Activated CD4-positive, alpha-beta T cell treated with anti-CD3 and anti-CD28 coated beads, Interleukin-2, amount 10 ng/mL, durations not matched to agents 7 days and 5 days (primary cell): ENCODE measurements at regions of chr10 and their contacts with region 1.

Region 1: DNA sequence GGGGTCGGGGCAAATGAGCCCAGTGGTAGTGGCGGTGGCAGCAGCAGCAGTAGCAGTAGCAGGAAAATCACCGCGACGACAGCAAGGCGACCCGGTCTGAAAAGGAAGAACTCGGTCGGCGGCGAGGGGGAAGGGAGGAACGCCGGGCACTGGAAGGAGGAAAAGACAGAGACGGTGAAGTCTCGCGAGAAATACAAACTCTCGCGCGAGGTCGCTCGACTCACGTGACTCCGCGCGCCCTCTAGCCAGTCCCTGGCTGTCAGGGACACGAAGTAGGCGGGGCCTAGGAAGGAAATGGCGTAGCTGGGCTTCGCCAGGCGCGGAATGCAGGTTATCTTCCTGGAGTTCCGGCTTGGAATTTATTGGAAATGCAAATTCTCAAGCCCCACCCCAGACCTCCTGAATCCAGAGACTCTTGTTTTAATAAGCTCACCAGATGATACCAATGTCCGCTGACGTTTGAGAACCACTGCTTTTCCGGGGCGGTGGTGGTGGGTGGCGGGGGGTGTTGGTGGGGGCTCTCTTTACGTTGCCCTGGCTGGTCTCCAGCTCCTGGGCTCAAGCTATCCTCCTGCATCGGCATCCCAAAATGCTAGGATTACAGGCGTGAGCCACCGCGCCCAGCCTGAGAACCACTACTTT is at the start of gene SMNDC1:
- DNase-seq: peak; percentile 98
- H3K4me3 Mint-ChIP-seq: peak within 1 kb of the TSS; percentile 96
- H3K27ac Mint-ChIP-seq: peak within 1 kb of the TSS; percentile 99
- H3K4me1 Mint-ChIP-seq: peaks cover 56% of the 10 kb centered on the region
- H3K27me3 Mint-ChIP-seq: peaks cover 2% of the 10 kb centered on the region
- total RNA-seq, gene SMNDC1: 36.3 to 44.2 TPM

Region 2: GRCh38 chr10:110059925-110060324 is 245.0 kb before region 1 on chr10:
- CTCF ChIA-PET with region 1: no interaction called
- POLR2A ChIA-PET with region 1: no interaction called
- DNase-seq: no peak
- H3K4me3 Mint-ChIP-seq: no peak overlapping the region
- H3K27ac Mint-ChIP-seq: no peak overlapping the region
- H3K4me1 Mint-ChIP-seq: peaks cover 83% of the 10 kb centered on the region
- H3K27me3 Mint-ChIP-seq: no peaks in the 10 kb centered on the region

Region 3: GRCh38 chr10:110326351-110327032 is 21.6 kb after region 1 on chr10:
- CTCF ChIA-PET with region 1: interaction called, 14 read pairs
- POLR2A ChIA-PET with region 1: no interaction called
- DNase-seq: no peak
- H3K4me3 Mint-ChIP-seq: no peak overlapping the region
- H3K27ac Mint-ChIP-seq: no peak overlapping the region
- H3K4me1 Mint-ChIP-seq: peaks cover 18% of the 10 kb centered on the region
- H3K27me3 Mint-ChIP-seq: peaks cover 5% of the 10 kb centered on the region

Region 4: GRCh38 chr10:110497438-110498086 is 192.7 kb after region 1 on chr10 and contains the start of gene DUSP5:
- CTCF ChIA-PET with region 1: interaction called, 11 read pairs
- POLR2A ChIA-PET with region 1: no interaction called
- DNase-seq: peak; percentile 94
- H3K4me3 Mint-ChIP-seq: peak within 1 kb of the TSS; percentile 89
- H3K27ac Mint-ChIP-seq: peak within 1 kb of the TSS; percentile 89
- H3K4me1 Mint-ChIP-seq: peaks cover 57% of the 10 kb centered on the region
- H3K27me3 Mint-ChIP-seq: no peaks in the 10 kb centered on the region
- total RNA-seq, gene DUSP5: 24.8 to 25.9 TPM

Region 5: DNA sequence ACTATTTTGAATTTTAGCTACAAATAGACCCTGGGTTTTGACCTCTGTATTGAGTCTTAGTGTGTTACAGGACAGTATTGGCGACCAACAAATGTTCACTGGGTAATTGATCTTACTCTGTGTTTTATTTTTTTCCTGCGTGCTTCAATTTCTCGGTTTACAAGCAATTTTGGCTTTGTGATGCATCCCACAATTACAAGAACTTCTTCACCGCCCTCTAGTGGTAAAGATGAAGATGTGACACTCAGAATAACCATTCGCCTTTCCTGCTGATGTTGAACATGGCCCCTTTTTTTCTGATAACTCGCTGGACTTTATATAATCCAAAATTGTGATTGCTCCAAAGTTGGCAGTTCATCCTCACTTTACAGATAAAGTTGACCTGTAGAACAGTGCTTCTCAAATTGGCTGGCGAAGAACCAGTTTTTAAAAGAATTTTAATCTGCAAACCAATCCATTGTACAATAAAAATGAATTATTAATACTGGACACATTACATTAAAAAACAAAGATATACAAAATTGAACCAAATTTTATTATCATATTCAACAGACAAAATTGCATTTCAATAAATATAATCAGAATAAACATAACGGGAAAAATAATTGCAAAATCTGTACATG is 242.3 kb after region 1 on chr10:
- CTCF ChIA-PET with region 1: interaction called, 23 read pairs
- POLR2A ChIA-PET with region 1: no interaction called
- DNase-seq: peak; percentile 42
- H3K4me3 Mint-ChIP-seq: no peak overlapping the region
- H3K27ac Mint-ChIP-seq: no peak overlapping the region
- H3K4me1 Mint-ChIP-seq: peaks cover 8% of the 10 kb centered on the region
- H3K27me3 Mint-ChIP-seq: peaks cover 26% of the 10 kb centered on the region